ENCODE measurements at regions of chr9 and their contacts with region 1.

Region 1: GRCh38 chr9:79868567-79869189 is 296.9 kb downstream of the TLE4 start:
- DNase-seq: no peak
- H3K4me3 ChIP-seq: no peak overlapping the region
- CTCF ChIP-seq: no peak

Region 2: GRCh38 chr9:79817438-79818004 is 51.2 kb before region 1 on chr9:
- in situ Hi-C with region 1: no loop called
- DNase-seq: no peak
- H3K4me3 ChIP-seq: no peak overlapping the region
- CTCF ChIP-seq: no peak

Region 3: GRCh38 chr9:79829566-79830302 is 38.9 kb before region 1 on chr9:
- in situ Hi-C with region 1: loop called (anchors 5 kb)
- DNase-seq: no peak
- H3K4me3 ChIP-seq: no peak overlapping the region
- CTCF ChIP-seq: no peak

Measured in astrocyte of the cerebellum (primary cell).